Activated CD4-positive, alpha-beta T cell treated with anti-CD3 and anti-CD28 coated beads, Interleukin-2, amount 10 ng/mL, durations not matched to agents 7 days and 5 days (primary cell): ENCODE measurements at regions of chr17 and their contacts with region 1.

Region 1: GRCh38 chr17:29524460-29525091 is 42.3 kb downstream of the ABHD15 start:
- DNase-seq: no peak
- H3K4me3 Mint-ChIP-seq: no peak overlapping the region
- H3K27ac Mint-ChIP-seq: no peak overlapping the region
- H3K4me1 Mint-ChIP-seq: no peaks in the 10 kb centered on the region
- H3K27me3 Mint-ChIP-seq: no peaks in the 10 kb centered on the region

Region 2: GRCh38 chr17:29504711-29505110 is 19.9 kb before region 1 on chr17:
- CTCF ChIA-PET with region 1: no interaction called
- POLR2A ChIA-PET with region 1: interaction called, 13 read pairs
- DNase-seq: no peak
- H3K4me3 Mint-ChIP-seq: no peak overlapping the region
- H3K27ac Mint-ChIP-seq: no peak overlapping the region
- H3K4me1 Mint-ChIP-seq: no peaks in the 10 kb centered on the region
- H3K27me3 Mint-ChIP-seq: no peaks in the 10 kb centered on the region